ENCODE measurements at regions of chr5 and their contacts with region 1.

Region 1: GRCh38 chr5:61162010-61162831 is at the start of gene SMIM15:
- DNase-seq: peak; percentile 93 to 97 (median 95)
- H3K4me3 ChIP-seq: peak within 1 kb of the TSS; percentile 71 to 99 (median 98)
- H3K27ac ChIP-seq: peak within 1 kb of the TSS; percentile 81 to 93
- H3K4me1 ChIP-seq: peaks cover 0 to 6% (median 0%) of the 10 kb centered on the region in 3 donors
- H3K27me3 ChIP-seq: no peaks in the 10 kb centered on the region
- CTCF ChIP-seq: no peak
- total RNA-seq, gene SMIM15: 68.1 TPM

Region 2: GRCh38 chr5:60668686-60669304 is 493.4 kb before region 1 on chr5:
- intact Hi-C with region 1: no loop called
- DNase-seq: peak in 2 of 5 donors; percentile 52 to 53
- H3K4me3 ChIP-seq: no peak overlapping the region
- H3K27ac ChIP-seq: no peak overlapping the region
- H3K4me1 ChIP-seq: peaks cover 4 to 12% (median 10%) of the 10 kb centered on the region in 3 donors
- H3K27me3 ChIP-seq: no peaks in the 10 kb centered on the region
- CTCF ChIP-seq: peak; percentile 52

Region 3: GRCh38 chr5:61416010-61416409 is 253.8 kb after region 1 on chr5:
- intact Hi-C with region 1: no loop called
- DNase-seq: no peak
- H3K4me3 ChIP-seq: no peak overlapping the region
- H3K27ac ChIP-seq: no peak overlapping the region
- H3K4me1 ChIP-seq: peaks cover 0 to 7% (median 0%) of the 10 kb centered on the region in 3 donors
- H3K27me3 ChIP-seq: no peaks in the 10 kb centered on the region
- CTCF ChIP-seq: no peak

Region 4: GRCh38 chr5:61658592-61659008 is 496.4 kb after region 1 on chr5:
- intact Hi-C with region 1: loop called (anchors 10 kb)
- DNase-seq: peak; percentile 91 to 93 (median 92)
- H3K4me3 ChIP-seq: peak overlapping the region in 1 of 3 donors; percentile 9
- H3K27ac ChIP-seq: peak overlapping the region in 1 of 2 donors; percentile 24
- H3K4me1 ChIP-seq: peaks cover 0 to 3% (median 0%) of the 10 kb centered on the region in 3 donors
- H3K27me3 ChIP-seq: no peaks in the 10 kb centered on the region
- CTCF ChIP-seq: peak; percentile 95

Measured in kidney (tissue), 22 donors.